ENCODE measurements at regions of chr11 and their contacts with region 1.

Region 1: DNA sequence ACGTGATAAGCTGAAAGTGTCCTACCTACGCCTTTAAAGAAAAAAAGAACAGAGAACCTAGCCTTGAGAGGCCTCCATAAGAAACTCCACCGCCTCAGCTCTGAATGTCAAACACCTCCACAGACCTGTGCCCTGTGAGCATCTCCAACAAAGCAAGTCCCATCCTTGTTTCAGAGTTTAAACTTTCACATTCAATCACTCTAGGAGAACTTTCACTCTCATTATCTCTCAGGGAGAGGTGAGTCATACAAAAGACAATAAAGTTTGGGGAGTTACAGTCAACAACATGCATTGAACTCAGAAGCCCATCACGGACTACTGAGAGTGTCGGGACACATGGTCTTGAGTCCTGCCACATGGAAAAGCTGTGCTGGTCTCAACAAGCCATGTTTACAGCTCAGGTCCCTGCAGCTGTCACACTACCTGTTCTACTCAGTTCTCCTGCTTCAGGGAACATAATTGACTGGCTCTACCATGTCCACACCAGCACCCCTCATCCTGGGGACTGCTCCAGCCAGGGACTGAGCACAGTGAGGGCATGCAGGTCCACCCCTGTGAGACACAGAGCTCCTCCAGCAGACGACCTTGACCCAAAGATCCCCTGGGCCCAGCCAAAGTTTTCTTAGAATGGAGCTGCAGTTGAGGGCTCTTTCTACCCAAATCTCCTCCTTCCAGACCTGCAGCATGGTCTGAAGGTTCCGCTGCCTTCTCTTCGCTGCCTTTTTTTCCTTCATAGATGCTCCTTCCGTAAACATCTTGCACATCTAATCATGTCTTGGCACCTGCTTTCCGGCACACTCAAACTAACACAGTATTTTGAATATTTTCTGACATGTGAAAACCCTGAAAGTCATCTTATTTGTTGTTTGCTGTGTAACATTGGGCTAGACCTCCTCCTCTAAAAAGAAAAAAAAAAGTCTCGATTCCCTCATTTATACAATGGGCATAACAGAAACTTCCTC is 114.9 kb downstream of the ETS1 start:
- DNase-seq: peak in 1 of 2 donors; percentile 75
- ATAC-seq: peak; percentile 14 to 53 (median 46)
- H3K4me3 ChIP-seq: no peak overlapping the region
- H3K4me3 Mint-ChIP-seq: peak overlapping the region; percentile 86
- H3K27ac ChIP-seq: peak overlapping the region; percentile 92
- H3K27ac Mint-ChIP-seq: peak overlapping the region; percentile 98 to 99
- H3K4me1 ChIP-seq: peaks cover 81% of the 10 kb centered on the region
- H3K4me1 Mint-ChIP-seq: peaks cover 99% of the 10 kb centered on the region in 2 donors
- H3K27me3 ChIP-seq: no peaks in the 10 kb centered on the region
- H3K27me3 Mint-ChIP-seq: no peaks in the 10 kb centered on the region
- CTCF ChIP-seq: no peak

Region 2: GRCh38 chr11:128214263-128214662 is 258.1 kb before region 1 on chr11:
- intact Hi-C with region 1: no loop called
- DNase-seq: no peak
- ATAC-seq: no peak
- H3K4me3 ChIP-seq: no peak overlapping the region
- H3K4me3 Mint-ChIP-seq: no peak overlapping the region
- H3K27ac ChIP-seq: no peak overlapping the region
- H3K27ac Mint-ChIP-seq: no peak overlapping the region
- H3K4me1 ChIP-seq: no peaks in the 10 kb centered on the region
- H3K4me1 Mint-ChIP-seq: peaks cover 4 to 9% of the 10 kb centered on the region in 2 donors
- H3K27me3 ChIP-seq: no peaks in the 10 kb centered on the region
- H3K27me3 Mint-ChIP-seq: no peaks in the 10 kb centered on the region
- CTCF ChIP-seq: no peak

Region 3: GRCh38 chr11:128290106-128290840 is 182.1 kb before region 1 on chr11:
- intact Hi-C with region 1: loop called (anchors 1 kb)
- DNase-seq: peak; percentile 62 to 95
- ATAC-seq: peak; percentile 79 to 90 (median 85)
- H3K4me3 ChIP-seq: peak overlapping the region; percentile 31
- H3K4me3 Mint-ChIP-seq: peak overlapping the region; percentile 94
- H3K27ac ChIP-seq: peak overlapping the region; percentile 97
- H3K27ac Mint-ChIP-seq: peak overlapping the region; percentile 98 to 99
- H3K4me1 ChIP-seq: peaks cover 37% of the 10 kb centered on the region
- H3K4me1 Mint-ChIP-seq: peaks cover 84 to 90% of the 10 kb centered on the region in 2 donors
- H3K27me3 ChIP-seq: no peaks in the 10 kb centered on the region
- H3K27me3 Mint-ChIP-seq: no peaks in the 10 kb centered on the region
- CTCF ChIP-seq: peak; percentile 87

Region 4: GRCh38 chr11:128354476-128354875 is 117.9 kb before region 1 on chr11:
- intact Hi-C with region 1: no loop called
- DNase-seq: no peak
- ATAC-seq: no peak
- H3K4me3 ChIP-seq: no peak overlapping the region
- H3K4me3 Mint-ChIP-seq: no peak overlapping the region
- H3K27ac ChIP-seq: no peak overlapping the region
- H3K27ac Mint-ChIP-seq: no peak overlapping the region
- H3K4me1 ChIP-seq: peaks cover 4% of the 10 kb centered on the region
- H3K4me1 Mint-ChIP-seq: peaks cover 20 to 23% of the 10 kb centered on the region in 2 donors
- H3K27me3 ChIP-seq: no peaks in the 10 kb centered on the region
- H3K27me3 Mint-ChIP-seq: peaks cover 0 to 4% of the 10 kb centered on the region in 2 donors
- CTCF ChIP-seq: no peak

Region 5: GRCh38 chr11:128422576-128423370 is 49.6 kb before region 1 on chr11:
- intact Hi-C with region 1: loop called (anchors 2 kb)
- DNase-seq: peak; percentile 83 to 93
- ATAC-seq: peak; percentile 90 to 94 (median 92)
- H3K4me3 ChIP-seq: no peak overlapping the region
- H3K4me3 Mint-ChIP-seq: peak overlapping the region; percentile 82
- H3K27ac ChIP-seq: peak overlapping the region; percentile 74
- H3K27ac Mint-ChIP-seq: peak overlapping the region; percentile 93 to 97
- H3K4me1 ChIP-seq: peaks cover 30% of the 10 kb centered on the region
- H3K4me1 Mint-ChIP-seq: peaks cover 42 to 47% of the 10 kb centered on the region in 2 donors
- H3K27me3 ChIP-seq: no peaks in the 10 kb centered on the region
- H3K27me3 Mint-ChIP-seq: no peaks in the 10 kb centered on the region
- CTCF ChIP-seq: no peak

Region 6: GRCh38 chr11:128482512-128483191 is 10.2 kb after region 1 on chr11:
- intact Hi-C with region 1: loop called (anchors 1 kb)
- DNase-seq: peak in 1 of 2 donors; percentile 88
- ATAC-seq: peak; percentile 72 to 80 (median 78)
- H3K4me3 ChIP-seq: peak overlapping the region; percentile 14
- H3K4me3 Mint-ChIP-seq: peak overlapping the region; percentile 77
- H3K27ac ChIP-seq: peak overlapping the region; percentile 92
- H3K27ac Mint-ChIP-seq: peak overlapping the region; percentile 98 to 99
- H3K4me1 ChIP-seq: peaks cover 56% of the 10 kb centered on the region
- H3K4me1 Mint-ChIP-seq: peaks cover 92 to 95% of the 10 kb centered on the region in 2 donors
- H3K27me3 ChIP-seq: no peaks in the 10 kb centered on the region
- H3K27me3 Mint-ChIP-seq: no peaks in the 10 kb centered on the region
- CTCF ChIP-seq: no peak

Region 7: DNA sequence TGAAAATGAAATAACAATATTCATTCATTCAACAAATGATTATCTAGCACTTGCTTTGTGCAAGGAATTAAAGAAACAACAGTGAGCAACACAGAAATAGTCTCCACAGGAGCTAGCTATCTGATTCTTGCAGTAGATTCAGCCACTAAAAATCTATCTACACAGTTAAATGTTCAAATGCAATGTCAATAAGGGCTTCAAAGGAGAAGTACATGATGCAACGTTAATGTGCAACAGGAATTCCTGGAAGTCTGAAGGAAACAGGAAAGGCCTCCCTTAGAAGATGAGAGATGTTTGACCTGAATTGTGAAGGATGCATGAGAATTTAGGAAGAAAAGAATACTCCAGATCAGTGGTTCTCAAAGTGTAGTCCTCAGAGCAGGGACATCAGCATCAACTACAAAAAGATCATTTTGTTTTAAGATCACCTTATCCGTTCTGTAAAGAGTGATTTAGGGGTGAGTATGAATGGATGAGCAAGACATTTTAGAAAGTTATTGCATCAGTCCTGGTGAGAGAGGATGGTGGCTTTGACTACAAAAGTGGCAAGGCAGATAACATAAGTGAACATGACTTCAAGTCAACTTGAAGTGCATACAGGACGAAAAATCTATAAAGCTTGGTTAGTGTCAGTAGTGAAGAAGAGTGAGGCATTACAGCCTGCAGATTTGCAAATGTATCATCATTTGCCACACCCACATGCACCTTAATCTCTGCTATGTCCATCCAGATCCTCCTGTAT is 19.0 kb after region 1 on chr11:
- intact Hi-C with region 1: loop called (anchors 2 kb)
- DNase-seq: no peak
- ATAC-seq: peak in 1 of 3 donors; percentile 15
- H3K4me3 ChIP-seq: no peak overlapping the region
- H3K4me3 Mint-ChIP-seq: peak overlapping the region; percentile 75
- H3K27ac ChIP-seq: peak overlapping the region; percentile 76
- H3K27ac Mint-ChIP-seq: peak overlapping the region; percentile 98 to 99
- H3K4me1 ChIP-seq: peaks cover 58% of the 10 kb centered on the region
- H3K4me1 Mint-ChIP-seq: peaks cover 90 to 91% of the 10 kb centered on the region in 2 donors
- H3K27me3 ChIP-seq: no peaks in the 10 kb centered on the region
- H3K27me3 Mint-ChIP-seq: no peaks in the 10 kb centered on the region
- CTCF ChIP-seq: no peak

Region 8: GRCh38 chr11:128506999-128507611 is 34.7 kb after region 1 on chr11:
- intact Hi-C with region 1: loop called (anchors 5 kb)
- DNase-seq: peak in 1 of 2 donors; percentile 60
- ATAC-seq: peak; percentile 42 to 57 (median 49)
- H3K4me3 ChIP-seq: peak overlapping the region; percentile 18
- H3K4me3 Mint-ChIP-seq: peak overlapping the region; percentile 98
- H3K27ac ChIP-seq: peak overlapping the region; percentile 67
- H3K27ac Mint-ChIP-seq: peak overlapping the region; percentile 98 to 99
- H3K4me1 ChIP-seq: peaks cover 77% of the 10 kb centered on the region
- H3K4me1 Mint-ChIP-seq: peaks cover 99 to 100% of the 10 kb centered on the region in 2 donors
- H3K27me3 ChIP-seq: no peaks in the 10 kb centered on the region
- H3K27me3 Mint-ChIP-seq: no peaks in the 10 kb centered on the region
- CTCF ChIP-seq: no peak

Region 9: GRCh38 chr11:128695539-128696221 is 223.3 kb after region 1 on chr11:
- intact Hi-C with region 1: loop called (anchors 2 kb)
- DNase-seq: peak in 1 of 2 donors; percentile 73
- ATAC-seq: peak; percentile 32 to 75 (median 46)
- H3K4me3 ChIP-seq: peak overlapping the region; percentile 89
- H3K4me3 Mint-ChIP-seq: peak overlapping the region; percentile 98
- H3K27ac ChIP-seq: peak overlapping the region; percentile 86
- H3K27ac Mint-ChIP-seq: peak overlapping the region; percentile 89 to 99
- H3K4me1 ChIP-seq: peaks cover 59% of the 10 kb centered on the region
- H3K4me1 Mint-ChIP-seq: peaks cover 68 to 79% of the 10 kb centered on the region in 2 donors
- H3K27me3 ChIP-seq: no peaks in the 10 kb centered on the region
- H3K27me3 Mint-ChIP-seq: peaks cover 0 to 8% of the 10 kb centered on the region in 2 donors
- CTCF ChIP-seq: no peak